MCF 10A (cell line): ENCODE measurements at regions of chrX and their contacts with region 1.

Region 1: DNA sequence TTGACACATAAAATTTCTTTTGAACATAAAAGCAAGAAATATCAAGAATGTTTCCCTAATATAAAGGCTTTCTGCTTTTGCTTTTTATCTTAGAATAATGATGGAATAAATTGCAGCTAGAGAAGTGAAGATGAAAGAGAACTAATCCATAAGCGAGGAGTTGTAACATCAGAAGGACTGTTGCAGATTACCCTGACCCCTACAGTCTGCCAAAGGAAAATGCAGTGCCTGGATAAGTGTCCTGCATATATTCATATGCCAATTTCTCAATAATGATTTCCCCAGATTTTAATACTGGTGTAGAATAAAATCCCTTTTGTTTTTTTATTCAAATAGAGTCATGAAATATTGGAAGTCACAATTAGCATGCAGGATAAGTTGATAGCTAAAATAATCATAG is 115.9 kb downstream of the MAGEC2 start:
- DNase-seq: peak; percentile 54
- H3K4me3 Mint-ChIP-seq: no peak overlapping the region
- H3K27ac Mint-ChIP-seq: no peak overlapping the region
- H3K4me1 Mint-ChIP-seq: no peaks in the 10 kb centered on the region
- H3K27me3 Mint-ChIP-seq: no peaks in the 10 kb centered on the region
- CTCF ChIP-seq: peak; percentile 72

Region 2: GRCh38 chrX:142043196-142043595 is 46.0 kb before region 1 on chrX:
- CTCF ChIA-PET with region 1: no interaction called
- POLR2A ChIA-PET with region 1: no interaction called
- intact Hi-C with region 1: no loop called
- DNase-seq: no peak
- H3K4me3 Mint-ChIP-seq: no peak overlapping the region
- H3K27ac Mint-ChIP-seq: no peak overlapping the region
- H3K4me1 Mint-ChIP-seq: no peaks in the 10 kb centered on the region
- H3K27me3 Mint-ChIP-seq: no peaks in the 10 kb centered on the region
- CTCF ChIP-seq: no peak

Region 3: DNA sequence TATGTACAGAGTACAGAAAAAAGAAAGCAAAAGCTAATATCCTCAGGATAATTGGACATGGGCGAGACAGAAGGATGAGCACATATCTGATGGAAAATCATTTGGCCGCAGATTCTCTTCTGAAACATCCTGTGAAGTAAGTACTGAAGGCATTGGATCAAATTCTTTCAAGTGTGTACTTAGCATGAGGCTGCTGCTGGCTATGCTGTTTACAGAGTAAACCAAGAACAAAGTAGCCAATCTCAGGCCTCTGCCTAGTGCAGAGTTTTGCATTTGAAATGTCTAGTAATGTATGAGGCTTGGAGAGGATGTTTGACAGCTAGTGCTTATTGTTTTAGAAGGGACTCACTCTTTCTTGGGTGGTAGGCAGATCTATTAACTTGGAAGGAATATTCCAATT is 12.6 kb before region 1 on chrX:
- CTCF ChIA-PET with region 1: interaction called, 12 read pairs
- POLR2A ChIA-PET with region 1: no interaction called
- intact Hi-C with region 1: no loop called
- DNase-seq: no peak
- H3K4me3 Mint-ChIP-seq: no peak overlapping the region
- H3K27ac Mint-ChIP-seq: no peak overlapping the region
- H3K4me1 Mint-ChIP-seq: no peaks in the 10 kb centered on the region
- H3K27me3 Mint-ChIP-seq: no peaks in the 10 kb centered on the region
- CTCF ChIP-seq: no peak